ENCODE measurements at regions of chr1 and their contacts with region 1.

Region 1: GRCh38 chr1:204136814-204137213 is 15.0 kb downstream of the ETNK2 start:
- DNase-seq: no peak
- H3K4me3 ChIP-seq: no peak overlapping the region
- CTCF ChIP-seq: no peak

Region 2: DNA sequence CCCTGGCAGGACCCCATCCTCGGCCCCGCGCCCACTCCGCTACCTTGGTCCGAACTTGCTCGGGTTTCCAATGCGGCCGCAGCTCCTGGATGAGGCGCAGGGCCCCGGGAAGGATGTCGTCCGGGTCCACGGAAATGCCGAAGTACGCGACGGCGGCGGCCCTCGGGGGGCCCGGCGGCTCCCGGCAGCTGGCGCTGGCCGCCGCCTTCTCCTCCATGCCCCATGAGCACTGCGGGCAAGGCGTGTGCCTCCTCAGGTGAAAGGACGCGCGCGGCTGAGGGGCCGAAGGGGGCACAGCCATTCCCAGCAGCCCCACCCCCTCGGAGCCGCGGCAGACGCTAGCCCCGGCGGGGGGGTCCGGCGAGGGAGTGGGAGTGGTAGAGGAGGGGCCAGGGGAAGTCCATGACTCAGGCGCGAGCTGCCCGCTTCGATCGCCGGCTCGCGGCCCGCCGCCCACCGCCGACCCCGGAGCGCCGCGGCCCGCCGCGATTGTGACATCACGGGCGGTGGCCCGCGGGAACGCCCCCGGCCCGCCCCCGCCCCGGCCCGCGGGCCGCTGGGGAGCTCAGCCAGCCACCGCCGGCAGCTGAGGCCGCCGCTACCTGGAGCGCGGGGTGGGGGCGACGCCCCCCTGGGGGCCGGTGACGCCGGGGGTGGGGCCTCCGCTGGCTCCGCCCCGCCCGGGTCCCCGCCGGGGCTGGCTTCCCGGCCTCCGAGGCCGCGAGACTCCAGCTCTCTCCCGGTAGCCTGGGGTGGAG is 14.9 kb after region 1 on chr1 and contains the start of gene ETNK2:
- CTCF ChIA-PET with region 1: interaction called, 10 read pairs
- POLR2A ChIA-PET with region 1: interaction called, 3 read pairs
- DNase-seq: no peak
- H3K4me3 ChIP-seq: peak within 1 kb of the TSS; percentile 66
- CTCF ChIP-seq: no peak